AG04450 (cell line): ENCODE measurements at regions of chr5 and their contacts with region 1.

Region 1: DNA sequence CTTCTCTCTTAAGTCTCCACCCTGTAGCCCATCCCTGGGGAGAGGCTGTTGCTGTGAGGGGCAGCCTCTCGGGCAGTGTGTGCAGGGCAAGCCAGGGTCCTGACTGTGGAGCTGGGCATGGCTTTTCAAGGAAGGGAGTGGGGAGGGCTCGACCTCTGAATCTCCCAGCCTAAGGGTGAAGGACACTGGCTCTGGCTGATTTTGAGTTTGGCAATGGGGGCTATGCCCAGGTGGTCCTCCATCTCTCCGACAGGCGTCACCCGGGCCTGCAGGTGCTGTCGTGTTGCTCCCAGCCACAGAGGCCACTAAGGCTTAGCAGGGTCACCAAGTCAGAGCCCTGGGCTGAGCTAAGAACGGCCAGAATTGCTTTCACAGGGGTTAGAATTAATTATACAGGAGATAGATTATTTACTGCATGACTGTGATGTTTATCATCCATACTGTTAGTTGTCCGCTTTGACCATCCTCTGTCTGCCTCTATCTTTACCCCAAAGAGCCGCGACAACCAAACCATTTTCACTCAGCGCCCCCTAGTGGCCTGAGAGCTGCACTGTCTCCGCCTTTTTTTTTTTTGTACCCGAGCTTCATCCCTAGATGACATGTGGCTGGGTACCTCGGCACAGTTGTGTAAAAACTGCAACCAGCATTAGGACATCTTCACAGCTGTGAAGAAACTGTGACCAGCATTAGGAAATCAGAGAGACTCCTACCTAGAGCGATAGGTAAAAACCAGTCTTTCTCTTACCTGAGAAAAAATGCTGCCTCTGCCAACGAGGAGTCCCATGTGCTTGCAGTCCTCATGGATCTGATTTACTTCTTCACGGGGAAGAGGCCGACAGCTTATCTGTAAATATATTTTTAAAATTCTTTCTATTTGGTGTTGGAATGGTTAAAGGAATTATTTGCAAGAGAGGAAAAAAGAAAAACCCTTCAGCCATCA is 44.5 kb downstream of the AGXT2 start:
- DNase-seq: no peak
- H3K4me3 ChIP-seq: no peak overlapping the region
- H3K27ac ChIP-seq: no peak overlapping the region
- H3K27me3 ChIP-seq: peaks cover 12% of the 10 kb centered on the region
- CTCF ChIP-seq: peak; percentile 89

Region 2: GRCh38 chr5:34474573-34475021 is 528.7 kb before region 1 on chr5:
- CTCF ChIA-PET with region 1: interaction called, 25 read pairs
- POLR2A ChIA-PET with region 1: no interaction called
- DNase-seq: peak; percentile 44
- H3K4me3 ChIP-seq: no peak overlapping the region
- H3K27ac ChIP-seq: no peak overlapping the region
- H3K27me3 ChIP-seq: no peaks in the 10 kb centered on the region
- CTCF ChIP-seq: peak; percentile 99

Region 3: DNA sequence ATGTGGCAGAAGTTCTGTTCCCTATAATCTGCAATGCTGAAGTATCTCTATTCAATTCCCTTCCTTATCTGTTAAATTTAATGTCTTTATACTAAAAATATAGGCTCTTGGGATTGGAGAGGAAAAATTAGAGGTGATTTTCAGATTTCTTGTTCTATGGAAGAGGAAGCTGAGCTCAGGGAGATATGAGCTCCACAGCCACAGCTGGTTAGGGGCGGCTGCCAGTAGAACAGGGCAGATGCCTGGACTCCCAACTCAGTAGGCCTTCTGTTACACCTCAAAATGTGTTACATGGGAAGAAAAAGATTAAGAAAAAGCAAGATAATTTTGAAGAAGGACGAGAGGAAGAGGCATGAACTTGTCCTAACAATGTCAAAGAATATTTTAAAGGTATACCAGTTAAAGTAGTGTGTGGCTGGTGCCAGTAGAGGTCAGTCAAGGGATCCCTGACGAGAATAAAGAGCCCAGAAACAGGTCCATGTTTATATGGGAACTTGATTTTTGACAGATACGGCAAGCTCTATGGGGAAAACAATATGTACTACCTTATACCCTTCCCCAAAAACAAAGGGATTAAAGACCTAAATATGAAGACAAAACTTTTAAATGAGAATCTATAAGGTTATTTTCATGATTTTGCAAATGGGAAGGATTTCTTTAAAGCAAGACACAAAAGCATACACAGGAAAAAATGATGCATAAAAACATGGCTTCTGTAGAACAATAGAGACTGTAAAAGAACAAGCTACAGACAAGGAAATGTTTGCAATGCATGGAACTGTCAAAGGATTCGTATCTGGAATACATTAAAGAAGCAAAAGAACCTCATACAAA is 45.2 kb before region 1 on chr5:
- CTCF ChIA-PET with region 1: interaction called, 76 read pairs
- POLR2A ChIA-PET with region 1: no interaction called
- DNase-seq: no peak
- H3K4me3 ChIP-seq: no peak overlapping the region
- H3K27ac ChIP-seq: no peak overlapping the region
- H3K27me3 ChIP-seq: no peaks in the 10 kb centered on the region
- CTCF ChIP-seq: peak; percentile 73

Region 4: DNA sequence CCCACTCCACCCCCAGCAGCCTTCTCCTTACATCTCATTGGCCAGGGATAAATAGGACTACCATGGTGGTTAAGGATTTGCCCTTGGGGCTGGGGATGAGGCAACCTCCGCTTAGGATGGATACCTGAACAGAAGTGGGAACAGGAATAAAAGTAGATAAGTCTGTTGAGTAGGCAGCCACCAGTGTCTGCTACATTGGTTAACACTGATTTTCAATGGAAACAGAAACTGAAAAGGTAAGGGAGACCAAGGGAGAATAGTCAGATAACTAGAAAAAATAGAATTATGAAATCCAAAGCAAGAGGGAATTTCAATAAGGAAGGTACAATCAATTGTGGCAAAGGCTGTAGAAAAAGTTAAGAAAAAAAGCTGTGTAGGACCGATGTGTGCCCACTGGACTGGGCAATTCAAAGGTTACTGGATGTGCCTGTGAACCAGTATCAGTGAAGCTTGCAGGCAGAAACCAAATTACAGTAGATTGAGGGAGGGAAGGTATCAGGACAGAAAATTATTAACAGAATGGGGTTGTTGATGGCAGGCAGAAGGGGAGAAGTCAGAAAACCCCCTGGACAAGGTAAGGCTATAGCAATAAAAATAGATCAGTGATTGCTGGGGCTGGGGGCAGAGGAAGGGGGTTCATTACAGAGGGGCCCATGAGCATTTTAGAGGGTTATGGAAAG is 25.2 kb before region 1 on chr5:
- CTCF ChIA-PET with region 1: interaction called, 10 read pairs
- POLR2A ChIA-PET with region 1: no interaction called
- DNase-seq: no peak
- H3K4me3 ChIP-seq: no peak overlapping the region
- H3K27ac ChIP-seq: no peak overlapping the region
- H3K27me3 ChIP-seq: peaks cover 17% of the 10 kb centered on the region
- CTCF ChIP-seq: no peak

Region 5: GRCh38 chr5:34991486-34992238 is 11.6 kb before region 1 on chr5:
- CTCF ChIA-PET with region 1: interaction called, 40 read pairs
- POLR2A ChIA-PET with region 1: no interaction called
- DNase-seq: no peak
- H3K4me3 ChIP-seq: no peak overlapping the region
- H3K27ac ChIP-seq: no peak overlapping the region
- H3K27me3 ChIP-seq: peaks cover 16% of the 10 kb centered on the region
- CTCF ChIP-seq: no peak

Region 6: GRCh38 chr5:35016174-35017051 is 13.1 kb after region 1 on chr5:
- CTCF ChIA-PET with region 1: interaction called, 12 read pairs
- POLR2A ChIA-PET with region 1: no interaction called
- DNase-seq: no peak
- H3K4me3 ChIP-seq: no peak overlapping the region
- H3K27ac ChIP-seq: no peak overlapping the region
- H3K27me3 ChIP-seq: no peaks in the 10 kb centered on the region
- CTCF ChIP-seq: no peak

Region 7: DNA sequence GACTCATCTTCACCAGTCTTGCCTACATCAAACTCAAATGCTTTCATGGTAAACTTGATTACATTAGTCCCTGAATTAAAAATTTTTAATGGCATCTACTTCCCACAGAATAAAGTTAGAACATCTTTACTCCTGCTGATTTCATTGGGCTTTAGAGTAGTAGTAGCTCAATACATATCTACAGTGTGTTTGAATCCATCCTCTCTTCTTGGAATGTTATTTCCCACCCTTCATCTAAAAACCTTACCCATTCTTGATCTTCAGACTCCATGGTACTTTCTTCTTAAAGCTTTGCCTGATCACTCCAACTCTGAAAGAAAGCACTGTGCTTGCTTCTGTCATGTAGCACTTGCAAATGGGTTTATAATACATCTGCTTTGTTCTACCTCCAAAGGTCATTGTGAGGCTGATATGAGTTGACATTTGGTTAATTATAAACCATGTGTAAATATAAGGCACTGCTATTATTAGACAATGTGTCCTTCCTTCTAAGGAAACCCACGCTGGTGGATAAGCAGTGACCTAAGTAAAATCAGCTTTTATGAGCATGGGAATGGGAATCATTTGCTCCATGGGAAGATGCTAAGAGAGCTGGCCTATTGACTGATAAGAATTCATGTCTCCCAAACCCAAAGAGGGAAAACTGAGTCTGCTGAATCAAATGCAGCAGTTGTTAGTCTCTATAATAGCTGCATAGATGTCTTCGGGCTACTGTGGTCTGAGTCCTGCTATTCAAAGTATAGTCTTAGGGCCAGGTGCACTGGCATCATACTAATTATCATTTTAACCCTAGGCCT is 234.5 kb after region 1 on chr5:
- CTCF ChIA-PET with region 1: no interaction called
- POLR2A ChIA-PET with region 1: no interaction called
- DNase-seq: no peak
- H3K4me3 ChIP-seq: no peak overlapping the region
- H3K27ac ChIP-seq: no peak overlapping the region
- H3K27me3 ChIP-seq: no peaks in the 10 kb centered on the region
- CTCF ChIP-seq: no peak